ENCODE measurements at regions of chr20 and their contacts with region 1.

Region 1: DNA sequence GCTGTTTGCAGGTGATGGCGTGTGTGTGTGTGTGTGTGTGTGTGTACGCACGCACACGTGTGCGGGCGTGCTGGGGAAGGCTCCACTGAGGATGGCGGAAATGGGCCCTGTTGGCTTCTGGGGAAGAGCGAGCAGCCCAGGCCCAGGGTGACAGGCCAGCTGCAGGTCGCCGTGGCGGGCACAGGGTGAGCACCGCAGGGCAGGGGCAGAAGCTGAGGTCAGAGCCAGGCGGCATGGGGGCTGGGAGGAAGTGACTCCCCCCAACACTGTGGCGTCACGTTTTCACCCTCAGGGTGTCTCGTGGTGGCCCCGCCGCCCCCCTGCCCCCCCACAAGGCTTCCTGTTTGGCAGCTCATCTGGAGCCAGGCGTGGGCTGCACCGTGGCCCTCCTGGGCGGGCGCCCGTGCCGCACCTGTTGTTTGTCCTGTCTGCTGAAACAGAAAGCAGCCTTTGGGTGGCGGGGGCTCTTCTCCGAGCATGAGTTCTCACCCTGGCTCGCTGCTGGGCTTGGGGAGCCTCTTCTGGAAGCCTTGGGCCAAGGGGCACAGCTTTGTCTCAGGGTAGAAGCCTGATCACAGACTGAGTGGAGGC is 7.1 kb downstream of the RBM38 start:
- DNase-seq: peak; percentile 97
- ATAC-seq: peak; percentile 73
- H3K4me3 Mint-ChIP-seq: peak overlapping the region; percentile 84
- H3K27ac Mint-ChIP-seq: peak overlapping the region; percentile 99
- H3K4me1 Mint-ChIP-seq: peaks cover 90% of the 10 kb centered on the region
- H3K27me3 Mint-ChIP-seq: no peaks in the 10 kb centered on the region
- CTCF ChIP-seq: no peak

Region 2: GRCh38 chr20:57241363-57241991 is 156.8 kb before region 1 on chr20:
- CTCF ChIA-PET with region 1: no interaction called
- POLR2A ChIA-PET with region 1: no interaction called
- intact Hi-C with region 1: no loop called
- DNase-seq: no peak
- ATAC-seq: no peak
- H3K4me3 Mint-ChIP-seq: no peak overlapping the region
- H3K27ac Mint-ChIP-seq: no peak overlapping the region
- H3K4me1 Mint-ChIP-seq: no peaks in the 10 kb centered on the region
- H3K27me3 Mint-ChIP-seq: peaks cover 4% of the 10 kb centered on the region
- CTCF ChIP-seq: no peak

Region 3: GRCh38 chr20:57383447-57384347 is 14.6 kb before region 1 on chr20:
- CTCF ChIA-PET with region 1: interaction called, 17 read pairs
- POLR2A ChIA-PET with region 1: interaction called, 88 read pairs
- intact Hi-C with region 1: no loop called
- DNase-seq: no peak
- ATAC-seq: no peak
- H3K4me3 Mint-ChIP-seq: no peak overlapping the region
- H3K27ac Mint-ChIP-seq: no peak overlapping the region
- H3K4me1 Mint-ChIP-seq: peaks cover 22% of the 10 kb centered on the region
- H3K27me3 Mint-ChIP-seq: no peaks in the 10 kb centered on the region
- CTCF ChIP-seq: no peak

Region 4: DNA sequence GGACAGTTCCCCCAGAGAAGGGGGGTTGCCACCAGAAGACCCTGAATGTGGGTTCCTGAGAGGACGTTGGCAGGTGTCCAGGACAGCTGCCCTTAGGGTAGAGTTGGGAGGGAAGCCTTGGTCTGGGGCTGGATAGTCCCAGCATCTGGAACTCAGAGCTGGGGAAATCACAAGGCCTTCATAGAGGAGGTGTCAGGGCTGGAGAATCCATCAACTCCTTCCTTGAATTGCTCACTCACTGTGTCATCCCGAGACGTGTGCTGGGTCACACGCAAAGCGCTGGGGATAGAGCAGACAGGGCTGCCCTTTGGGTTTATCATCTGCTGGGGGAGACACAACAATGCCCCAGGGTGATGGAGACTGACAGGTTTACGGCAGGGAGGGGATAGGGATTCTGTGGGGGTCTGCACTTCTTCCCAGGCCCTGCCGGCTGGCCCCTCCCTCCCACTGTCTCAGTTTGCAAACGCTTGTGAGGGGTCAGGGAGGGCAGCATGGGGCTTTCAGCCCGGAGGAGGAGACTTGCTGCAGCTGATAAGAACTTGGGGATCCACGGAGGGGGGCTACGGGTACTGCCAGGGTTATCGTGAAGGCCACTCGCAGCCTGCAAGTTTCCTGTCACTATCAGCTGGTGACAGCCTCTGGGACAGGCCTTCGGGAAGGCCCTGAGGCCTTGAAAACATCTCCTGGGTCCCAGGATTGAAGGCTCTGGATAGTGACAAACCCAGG is 11.5 kb after region 1 on chr20:
- CTCF ChIA-PET with region 1: interaction called, 7 read pairs
- POLR2A ChIA-PET with region 1: interaction called, 24 read pairs
- intact Hi-C with region 1: no loop called
- DNase-seq: no peak
- ATAC-seq: no peak
- H3K4me3 Mint-ChIP-seq: no peak overlapping the region
- H3K27ac Mint-ChIP-seq: no peak overlapping the region
- H3K4me1 Mint-ChIP-seq: peaks cover 9% of the 10 kb centered on the region
- H3K27me3 Mint-ChIP-seq: no peaks in the 10 kb centered on the region
- CTCF ChIP-seq: no peak

Region 5: GRCh38 chr20:57425150-57426013 is 27.1 kb after region 1 on chr20:
- CTCF ChIA-PET with region 1: interaction called, 3 read pairs
- POLR2A ChIA-PET with region 1: interaction called, 16 read pairs
- intact Hi-C with region 1: loop called (anchors 5 kb)
- DNase-seq: no peak
- ATAC-seq: peak; percentile 17
- H3K4me3 Mint-ChIP-seq: no peak overlapping the region
- H3K27ac Mint-ChIP-seq: peak overlapping the region; percentile 52
- H3K4me1 Mint-ChIP-seq: peaks cover 35% of the 10 kb centered on the region
- H3K27me3 Mint-ChIP-seq: no peaks in the 10 kb centered on the region
- CTCF ChIP-seq: no peak

Region 6: DNA sequence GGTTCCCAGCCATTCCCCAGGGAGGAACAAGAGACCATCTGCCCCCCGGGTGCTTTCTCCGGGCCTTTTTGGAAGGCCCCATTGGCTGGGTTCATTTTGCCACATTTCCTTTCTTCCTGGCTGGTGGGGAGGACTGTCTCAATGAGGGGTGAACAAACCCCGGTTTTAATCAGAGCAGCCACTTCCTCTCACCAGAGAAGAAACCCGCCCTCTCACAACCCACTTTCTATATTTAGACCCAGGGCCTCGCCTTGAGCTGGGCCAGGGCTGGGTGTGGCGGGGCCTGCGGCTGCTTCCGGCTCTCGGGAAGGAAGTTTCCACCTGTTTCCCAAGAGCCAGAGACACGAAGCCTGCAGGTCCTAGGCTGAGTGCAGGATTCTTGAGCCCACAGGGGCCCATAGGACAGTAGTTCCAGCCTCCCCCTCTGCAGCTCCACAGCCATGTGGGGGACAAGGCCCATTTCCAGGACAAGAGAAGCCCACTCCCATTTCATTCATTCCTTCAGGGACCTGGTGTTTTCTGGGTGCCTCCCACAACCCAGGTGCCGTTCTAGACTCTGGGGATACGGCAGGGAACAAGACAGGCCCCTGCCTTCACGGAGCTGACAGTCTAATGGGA is 34.7 kb after region 1 on chr20:
- CTCF ChIA-PET with region 1: interaction called, 4 read pairs
- POLR2A ChIA-PET with region 1: interaction called, 16 read pairs
- intact Hi-C with region 1: loop called (anchors 5 kb)
- DNase-seq: peak; percentile 84
- ATAC-seq: peak; percentile 86
- H3K4me3 Mint-ChIP-seq: no peak overlapping the region
- H3K27ac Mint-ChIP-seq: peak overlapping the region; percentile 78
- H3K4me1 Mint-ChIP-seq: peaks cover 58% of the 10 kb centered on the region
- H3K27me3 Mint-ChIP-seq: no peaks in the 10 kb centered on the region
- CTCF ChIP-seq: no peak

Region 7: DNA sequence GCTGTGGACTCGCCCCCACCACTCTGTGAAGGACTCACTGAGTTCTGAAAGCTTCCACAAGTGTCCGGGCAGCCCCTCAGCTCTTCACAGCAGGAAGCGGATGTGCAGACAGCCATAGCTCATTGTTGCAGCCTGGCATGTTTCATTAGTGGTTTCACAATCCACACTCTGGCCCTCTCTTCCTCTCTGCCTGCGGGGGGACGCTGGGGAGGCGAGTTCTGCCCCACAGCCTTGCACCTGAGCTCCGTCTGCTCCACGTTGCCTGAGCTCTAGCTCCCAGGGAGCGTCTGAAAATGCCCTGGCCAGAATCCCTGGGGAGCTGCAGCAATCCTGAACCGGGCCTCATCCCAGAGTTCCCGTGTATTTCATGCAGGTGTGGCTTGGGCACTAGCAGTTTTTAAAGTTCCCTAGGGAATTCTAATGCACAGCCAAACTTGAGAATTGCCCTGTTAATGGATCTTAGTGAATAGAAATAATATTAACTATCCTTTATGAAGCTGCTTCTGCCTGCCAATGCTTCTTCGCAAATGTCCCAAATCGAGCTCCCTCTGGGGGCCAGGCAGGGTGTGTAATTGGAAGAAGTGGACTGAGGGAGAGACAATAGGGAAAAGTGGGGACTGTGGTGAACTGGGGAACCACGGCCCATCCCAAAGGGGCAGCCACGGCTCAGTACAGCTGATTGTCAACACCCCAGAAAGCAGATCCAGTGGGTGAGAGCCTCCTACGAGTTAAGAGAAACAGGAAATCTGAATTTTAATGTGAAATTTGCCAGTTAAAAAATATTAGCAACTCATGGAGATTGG is 75.1 kb after region 1 on chr20:
- CTCF ChIA-PET with region 1: interaction called, 7 read pairs
- POLR2A ChIA-PET with region 1: interaction called, 18 read pairs
- intact Hi-C with region 1: no loop called
- DNase-seq: peak; percentile 71
- ATAC-seq: peak; percentile 93
- H3K4me3 Mint-ChIP-seq: no peak overlapping the region
- H3K27ac Mint-ChIP-seq: peak overlapping the region; percentile 49
- H3K4me1 Mint-ChIP-seq: peaks cover 22% of the 10 kb centered on the region
- H3K27me3 Mint-ChIP-seq: no peaks in the 10 kb centered on the region
- CTCF ChIP-seq: no peak

Region 8: GRCh38 chr20:57480444-57481160 is 82.3 kb after region 1 on chr20:
- CTCF ChIA-PET with region 1: no interaction called
- POLR2A ChIA-PET with region 1: interaction called, 11 read pairs
- intact Hi-C with region 1: no loop called
- DNase-seq: peak; percentile 51
- ATAC-seq: peak; percentile 67
- H3K4me3 Mint-ChIP-seq: peak overlapping the region; percentile 26
- H3K27ac Mint-ChIP-seq: peak overlapping the region; percentile 20
- H3K4me1 Mint-ChIP-seq: peaks cover 24% of the 10 kb centered on the region
- H3K27me3 Mint-ChIP-seq: no peaks in the 10 kb centered on the region
- CTCF ChIP-seq: no peak